Endothelial cell of umbilical vein (primary cell): ENCODE measurements at regions of chr19 and their contacts with region 1.

Region 1: DNA sequence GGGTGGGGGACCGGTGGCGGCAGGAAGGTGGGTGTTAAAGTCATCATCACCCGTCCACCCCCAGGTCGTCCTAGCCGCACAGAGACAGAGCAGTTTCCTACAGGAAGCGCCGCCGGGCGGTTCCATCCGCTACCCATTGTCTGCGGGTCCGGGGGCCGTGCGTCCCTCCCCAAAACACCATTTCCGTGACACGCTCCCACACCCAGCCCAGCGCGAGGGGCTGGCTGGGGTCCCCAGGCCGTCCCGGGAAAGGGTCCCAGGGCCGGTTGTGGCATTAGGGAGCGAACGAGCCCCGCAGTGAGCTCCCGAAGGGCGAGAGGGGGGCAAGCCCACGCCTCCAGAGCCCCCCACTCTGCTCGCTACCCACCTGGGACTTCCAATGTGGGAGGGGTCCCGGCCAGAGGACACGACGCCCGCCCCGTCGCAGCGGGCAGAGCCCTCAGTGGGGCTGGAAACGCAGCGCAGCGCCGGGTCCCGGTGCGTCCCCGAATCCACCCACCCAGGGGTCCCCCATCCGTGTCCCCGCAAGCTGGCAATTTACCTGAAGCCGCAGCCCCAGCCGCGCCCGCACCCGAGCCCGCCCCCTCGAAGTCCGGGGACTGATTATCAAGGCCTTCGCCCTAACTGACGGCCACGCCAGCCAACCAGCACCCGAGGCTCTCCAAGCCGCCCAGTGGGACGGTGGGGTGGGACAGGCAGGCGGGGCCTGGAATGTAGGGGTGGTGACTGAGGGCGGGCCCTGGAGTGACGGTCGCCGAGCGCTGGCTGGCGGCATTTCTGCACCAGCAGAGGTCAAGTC is at the start of gene KANK3:
- DNase-seq: peak; percentile 94
- H3K4me3 ChIP-seq: peak within 1 kb of the TSS; percentile 52 to 65 (median 61)
- H3K27ac ChIP-seq: peak within 1 kb of the TSS; percentile 80
- H3K4me1 ChIP-seq: peaks cover 26% of the 10 kb centered on the region
- H3K27me3 ChIP-seq: no peaks in the 10 kb centered on the region
- CTCF ChIP-seq: no peak
- POLR2A ChIP-seq: peak; percentile 88
- total RNA-seq, gene KANK3: 26.3 and 30.0 TPM in 2 replicates

Region 2: DNA sequence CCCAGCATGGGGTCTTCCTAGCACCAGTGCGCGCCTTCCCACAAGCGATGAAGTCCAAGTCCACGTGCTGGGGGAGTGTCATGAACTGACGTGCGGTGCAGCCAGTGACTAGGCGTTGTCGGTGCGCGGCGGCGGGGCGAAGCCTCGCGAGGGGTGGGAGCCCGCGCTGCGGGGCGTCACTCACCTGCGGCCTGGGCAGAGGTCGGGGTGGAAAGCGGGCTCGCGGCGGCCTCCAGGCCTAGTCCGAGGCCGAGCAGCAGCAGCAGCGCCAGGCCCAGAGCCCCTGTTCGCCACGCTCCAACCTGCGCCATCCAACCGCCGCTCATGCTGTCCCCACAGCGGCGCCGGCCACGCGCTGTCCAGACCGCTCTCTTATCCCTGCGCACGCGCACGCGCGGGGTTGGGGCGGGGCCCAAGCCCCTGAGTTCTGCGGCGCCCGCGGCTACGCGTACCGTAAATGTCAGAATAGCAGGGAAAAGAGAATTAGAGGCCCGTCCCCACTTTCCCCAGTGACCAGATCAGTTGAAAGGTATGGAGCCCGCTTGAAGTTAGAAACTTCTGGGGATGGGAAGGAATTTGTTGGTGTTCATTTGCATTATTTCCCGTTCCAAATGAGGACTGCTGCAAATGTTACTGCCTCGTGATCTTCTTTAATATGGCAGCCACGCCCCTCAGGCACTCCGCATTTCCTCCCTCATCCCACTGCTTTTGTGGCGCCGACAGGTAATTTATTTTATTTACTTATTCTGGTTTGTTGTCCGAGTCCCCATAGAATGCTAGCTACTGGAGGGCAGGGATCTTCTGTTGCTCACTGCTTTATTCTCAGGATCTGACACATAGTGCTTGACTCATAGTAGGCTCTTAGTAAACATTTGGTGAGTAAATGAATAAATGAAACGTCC is 34.7 kb before region 1 on chr19 and contains the start of gene CD320:
- CTCF ChIA-PET with region 1: no interaction called
- POLR2A ChIA-PET with region 1: no interaction called
- dilution Hi-C with region 1: no loop called
- intact Hi-C with region 1: loop called (anchors 2 kb)
- DNase-seq: peak; percentile 92
- H3K4me3 ChIP-seq: peak within 1 kb of the TSS; percentile 43 to 48 (median 44)
- H3K27ac ChIP-seq: peak within 1 kb of the TSS; percentile 69
- H3K4me1 ChIP-seq: peaks cover 19% of the 10 kb centered on the region
- H3K27me3 ChIP-seq: no peaks in the 10 kb centered on the region
- CTCF ChIP-seq: no peak
- POLR2A ChIP-seq: peak; percentile 89
- total RNA-seq, gene CD320: 84.9 and 86.7 TPM in 2 replicates

Region 3: GRCh38 chr19:8321060-8321985 is 21.6 kb before region 1 on chr19 and contains the starts of genes NDUFA7 and RPS28:
- CTCF ChIA-PET with region 1: interaction called, 6 read pairs
- POLR2A ChIA-PET with region 1: interaction called, 4 read pairs
- dilution Hi-C with region 1: no loop called
- intact Hi-C with region 1: loop called (anchors 2 kb)
- DNase-seq: peak; percentile 97
- H3K4me3 ChIP-seq: peak within 1 kb of the TSS; percentile 83 to 95 (median 92)
- H3K27ac ChIP-seq: peak within 1 kb of the TSS; percentile 82
- H3K4me1 ChIP-seq: peaks cover 26% of the 10 kb centered on the region
- H3K27me3 ChIP-seq: no peaks in the 10 kb centered on the region
- CTCF ChIP-seq: peak in 1 of 2 donors; percentile 12
- POLR2A ChIP-seq: peak; percentile 97
- total RNA-seq, gene NDUFA7: 60.2 and 62.0 TPM in 2 replicates
- total RNA-seq, gene RPS28: 1,555 and 1,664 TPM in 2 replicates

Region 4: GRCh38 chr19:8373867-8374813 is 31.3 kb after region 1 on chr19:
- CTCF ChIA-PET with region 1: no interaction called
- POLR2A ChIA-PET with region 1: no interaction called
- dilution Hi-C with region 1: no loop called
- intact Hi-C with region 1: no loop called
- DNase-seq: no peak
- H3K4me3 ChIP-seq: no peak overlapping the region
- H3K27ac ChIP-seq: no peak overlapping the region
- H3K4me1 ChIP-seq: no peaks in the 10 kb centered on the region
- H3K27me3 ChIP-seq: no peaks in the 10 kb centered on the region
- CTCF ChIP-seq: no peak
- POLR2A ChIP-seq: no peak

Region 5: DNA sequence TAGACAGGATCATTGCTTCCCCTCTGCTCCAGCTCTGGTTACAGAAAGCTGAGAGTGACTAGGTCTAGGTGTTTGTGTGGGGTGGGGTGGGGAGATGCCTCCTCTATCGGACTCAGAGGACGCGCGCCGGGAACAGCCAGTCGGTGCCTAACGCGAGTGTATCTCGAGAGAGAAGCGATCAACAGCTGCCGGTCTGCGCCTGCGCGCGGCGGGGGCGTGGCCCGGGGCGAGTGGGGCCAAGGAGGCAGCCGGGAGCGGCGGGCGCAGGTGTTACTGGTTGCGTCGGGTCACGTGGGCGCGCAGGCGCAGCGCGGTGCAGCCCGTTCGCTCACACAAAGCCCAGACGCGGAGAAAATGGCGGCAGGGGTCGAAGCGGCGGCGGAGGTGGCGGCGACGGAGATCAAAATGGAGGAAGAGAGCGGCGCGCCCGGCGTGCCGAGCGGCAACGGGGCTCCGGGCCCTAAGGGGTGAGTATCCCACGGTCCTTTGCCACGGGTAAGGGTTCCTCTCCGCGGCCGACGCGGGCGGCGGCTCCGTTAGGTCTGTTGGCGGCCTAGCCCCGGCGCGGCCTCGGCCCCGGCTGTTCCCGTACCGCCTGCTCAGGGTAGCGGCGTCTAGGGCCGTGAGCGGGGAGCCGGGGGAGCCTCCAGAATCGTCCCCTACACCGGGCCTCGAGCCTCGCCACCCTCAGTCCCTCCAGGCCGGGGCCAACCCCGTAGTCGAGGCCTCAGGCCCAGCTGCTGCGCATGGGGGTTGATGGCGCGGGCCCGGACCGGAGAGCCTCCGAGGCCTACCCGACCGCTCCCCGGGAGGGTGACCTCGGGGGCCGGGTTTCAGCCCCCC is 102.0 kb after region 1 on chr19 and contains the start of gene HNRNPM:
- CTCF ChIA-PET with region 1: no interaction called
- POLR2A ChIA-PET with region 1: no interaction called
- dilution Hi-C with region 1: no loop called
- intact Hi-C with region 1: no loop called
- DNase-seq: peak; percentile 99
- H3K4me3 ChIP-seq: peak within 1 kb of the TSS; percentile 81 to 98 (median 84)
- H3K27ac ChIP-seq: peak within 1 kb of the TSS; percentile 93
- H3K4me1 ChIP-seq: peaks cover 25% of the 10 kb centered on the region
- H3K27me3 ChIP-seq: no peaks in the 10 kb centered on the region
- CTCF ChIP-seq: no peak
- POLR2A ChIP-seq: peak; percentile 77
- total RNA-seq, gene HNRNPM: 288 and 301 TPM in 2 replicates

Region 6: GRCh38 chr19:8468761-8469373 is 126.0 kb after region 1 on chr19:
- CTCF ChIA-PET with region 1: no interaction called
- POLR2A ChIA-PET with region 1: no interaction called
- dilution Hi-C with region 1: no loop called
- intact Hi-C with region 1: no loop called
- DNase-seq: no peak
- H3K4me3 ChIP-seq: no peak overlapping the region
- H3K27ac ChIP-seq: no peak overlapping the region
- H3K4me1 ChIP-seq: no peaks in the 10 kb centered on the region
- H3K27me3 ChIP-seq: no peaks in the 10 kb centered on the region
- CTCF ChIP-seq: no peak
- POLR2A ChIP-seq: no peak

Region 7: GRCh38 chr19:8505680-8506401 is 163.0 kb after region 1 on chr19:
- CTCF ChIA-PET with region 1: interaction called, 11 read pairs
- POLR2A ChIA-PET with region 1: no interaction called
- dilution Hi-C with region 1: no loop called
- intact Hi-C with region 1: loop called (anchors 2 kb)
- DNase-seq: peak; percentile 68
- H3K4me3 ChIP-seq: peak overlapping the region; percentile 41 to 61 (median 55)
- H3K27ac ChIP-seq: no peak overlapping the region
- H3K4me1 ChIP-seq: peaks cover 8% of the 10 kb centered on the region
- H3K27me3 ChIP-seq: no peaks in the 10 kb centered on the region
- CTCF ChIP-seq: peak; percentile 86 to 92
- POLR2A ChIP-seq: no peak